ENCODE measurements at regions of chr5 and their contacts with region 1.

Region 1: DNA sequence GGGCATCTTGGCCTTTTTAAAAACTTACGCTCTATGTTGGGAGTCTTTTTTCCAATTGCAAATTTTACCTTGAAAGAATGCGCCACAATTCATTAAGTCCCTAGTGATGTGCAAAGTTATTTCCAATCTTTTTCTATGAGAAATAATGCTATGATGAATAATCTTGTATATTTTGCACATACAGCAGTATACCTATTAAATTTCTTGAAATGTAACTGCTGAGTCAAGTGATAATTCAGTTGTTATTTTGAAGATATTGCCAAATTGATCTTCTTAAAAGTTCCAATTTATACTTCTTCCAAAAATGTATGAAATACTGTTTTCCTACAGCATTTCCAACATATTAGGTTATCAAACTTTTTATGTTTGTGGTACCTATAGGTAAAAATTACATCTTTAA is 92.8 kb upstream of the PPP2R2B start:
- DNase-seq: no peak
- H3K4me3 ChIP-seq: no peak overlapping the region
- H3K27ac ChIP-seq: no peak overlapping the region
- H3K4me1 ChIP-seq: no peaks in the 10 kb centered on the region
- H3K27me3 ChIP-seq: no peaks in the 10 kb centered on the region
- CTCF ChIP-seq: no peak
- POLR2A ChIP-seq: no peak

Region 2: GRCh38 chr5:146013761-146014160 is 957.6 kb before region 1 on chr5:
- intact Hi-C with region 1: loop called (anchors 5 kb)
- DNase-seq: no peak
- H3K4me3 ChIP-seq: no peak overlapping the region
- H3K27ac ChIP-seq: no peak overlapping the region
- H3K4me1 ChIP-seq: no peaks in the 10 kb centered on the region
- H3K27me3 ChIP-seq: no peaks in the 10 kb centered on the region
- CTCF ChIP-seq: no peak
- POLR2A ChIP-seq: no peak

Measured in vagina (tissue), 2 donors.